ENCODE measurements at regions of chr3 and their contacts with region 1.

Region 1: GRCh38 chr3:76638006-76638405 is 401.9 kb upstream of the ROBO2 start:
- DNase-seq: no peak
- H3K4me3 ChIP-seq: no peak overlapping the region
- H3K27ac ChIP-seq: no peak overlapping the region
- H3K4me1 ChIP-seq: peaks cover 0 to 4% (median 2%) of the 10 kb centered on the region in 4 experiments; a peak in 2 of 7 replicates
- H3K27me3 ChIP-seq: no peaks in the 10 kb centered on the region
- CTCF ChIP-seq: no peak
- EP300 ChIP-seq: no peak
- POLR2A ChIP-seq: no peak
- RAD21 ChIP-seq: no peak

Region 2: DNA sequence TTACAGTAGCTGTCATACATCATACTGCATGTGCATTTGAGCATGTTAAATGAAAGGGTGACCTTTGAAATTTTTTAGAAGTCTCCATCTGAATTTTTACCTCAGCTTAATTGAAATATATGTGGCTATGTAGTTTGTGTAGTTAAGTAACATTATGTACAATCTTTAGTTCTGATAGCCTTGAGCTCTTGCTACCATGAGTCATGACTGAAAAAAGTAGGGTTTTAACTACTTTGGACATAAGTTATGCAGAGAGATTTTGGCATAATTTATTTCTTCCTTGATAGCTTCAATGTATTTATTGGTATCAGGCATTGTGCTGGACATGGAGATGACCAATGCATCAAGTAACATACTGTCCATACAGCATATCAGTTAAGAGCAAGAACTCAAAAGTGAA is 476.1 kb before region 1 on chr3:
- CTCF ChIA-PET with region 1: no interaction called
- POLR2A ChIA-PET with region 1: no interaction called
- DNase-seq: no peak
- H3K4me3 ChIP-seq: no peak overlapping the region
- H3K27ac ChIP-seq: no peak overlapping the region
- H3K4me1 ChIP-seq: no peaks in the 10 kb centered on the region
- H3K27me3 ChIP-seq: no peaks in the 10 kb centered on the region
- CTCF ChIP-seq: no peak
- EP300 ChIP-seq: no peak
- POLR2A ChIP-seq: no peak
- RAD21 ChIP-seq: no peak

Region 3: DNA sequence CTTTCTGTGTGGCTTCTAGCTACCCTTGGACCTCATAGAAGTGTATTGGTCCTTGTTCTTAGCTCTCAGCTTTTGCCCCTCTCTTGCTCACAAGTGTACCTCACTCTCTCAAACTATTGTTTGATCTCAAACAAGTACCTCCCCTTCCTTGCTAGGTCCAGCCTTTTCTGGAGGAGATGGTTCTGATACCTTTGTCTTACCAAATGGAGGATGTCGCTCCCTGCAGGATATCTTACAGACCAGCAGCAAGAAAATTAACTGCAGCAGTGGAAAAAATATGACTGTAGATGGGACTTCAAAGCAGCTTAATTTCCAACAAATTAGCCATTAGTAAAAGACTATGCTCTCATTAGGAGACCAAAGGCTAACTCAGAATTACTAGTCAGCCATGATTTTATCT is 13.8 kb after region 1 on chr3:
- CTCF ChIA-PET with region 1: interaction called, 10 read pairs
- POLR2A ChIA-PET with region 1: no interaction called
- DNase-seq: no peak
- H3K4me3 ChIP-seq: no peak overlapping the region
- H3K27ac ChIP-seq: no peak overlapping the region
- H3K4me1 ChIP-seq: peaks cover 0 to 4% (median 0%) of the 10 kb centered on the region in 4 experiments; a peak in 2 of 7 replicates
- H3K27me3 ChIP-seq: no peaks in the 10 kb centered on the region
- CTCF ChIP-seq: peak in 2 of 3 experiments; percentile 18 to 47; a peak in 2 of 4 replicates
- EP300 ChIP-seq: no peak
- POLR2A ChIP-seq: no peak
- RAD21 ChIP-seq: peak; percentile 53 to 62

Measured in H1 (cell line).